Mammary epithelial cell (primary cell): ENCODE measurements at regions of chr11 and their contacts with region 1.

Region 1: GRCh38 chr11:82216927-82217570 is 516.6 kb downstream of the FAM181B start:
- DNase-seq: no peak
- H3K4me3 ChIP-seq: no peak overlapping the region
- H3K27ac ChIP-seq: no peak overlapping the region
- H3K4me1 ChIP-seq: no peaks in the 10 kb centered on the region
- H3K27me3 ChIP-seq: no peaks in the 10 kb centered on the region
- CTCF ChIP-seq: no peak

Region 2: GRCh38 chr11:82105331-82105998 is 111.6 kb before region 1 on chr11:
- CTCF ChIA-PET with region 1: no interaction called
- dilution Hi-C with region 1: no loop called
- in situ Hi-C with region 1: loop called in 1 of 2 experiments (anchors 25 kb)
- intact Hi-C with region 1: no loop called
- DNase-seq: no peak
- H3K4me3 ChIP-seq: no peak overlapping the region
- H3K27ac ChIP-seq: no peak overlapping the region
- H3K4me1 ChIP-seq: no peaks in the 10 kb centered on the region
- H3K27me3 ChIP-seq: no peaks in the 10 kb centered on the region
- CTCF ChIP-seq: no peak